HEK293 (cell line): ENCODE measurements at regions of chr1 and their contacts with region 1.

Region 1: DNA sequence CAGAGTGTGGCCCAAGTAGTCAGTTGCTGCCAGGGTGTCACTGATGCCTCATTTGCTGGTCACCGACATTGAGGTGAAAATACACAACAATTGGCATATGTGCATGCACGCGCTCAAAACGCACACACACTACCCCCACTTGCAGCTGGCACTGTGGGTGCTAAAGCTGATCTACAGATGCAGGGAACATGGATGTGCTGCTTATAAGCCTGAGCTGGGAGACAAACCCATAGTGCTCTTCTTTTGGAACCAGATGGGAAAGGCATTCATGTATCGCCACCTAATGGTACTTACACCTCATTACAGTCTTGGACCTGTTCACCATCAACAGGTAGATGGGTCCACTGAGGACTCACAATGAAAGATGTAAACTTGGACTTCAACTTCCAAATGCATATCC is 70.3 kb upstream of the CAMK1G start:
- H3K4me3 ChIP-seq: no peak overlapping the region
- H3K27ac ChIP-seq: no peak overlapping the region
- H3K4me1 ChIP-seq: no peaks in the 10 kb centered on the region
- CTCF ChIP-seq: peak; percentile 19; the same call in 1 of the 2 replicates

Region 2: GRCh38 chr1:209435654-209436566 is 77.3 kb before region 1 on chr1:
- CTCF ChIA-PET with region 1: interaction called, 14 read pairs
- POLR2A ChIA-PET with region 1: no interaction called
- H3K4me3 ChIP-seq: no peak overlapping the region
- H3K27ac ChIP-seq: no peak overlapping the region
- H3K4me1 ChIP-seq: no peaks in the 10 kb centered on the region
- CTCF ChIP-seq: peak; percentile 66

Region 3: GRCh38 chr1:209493559-209493958 is 19.7 kb before region 1 on chr1:
- CTCF ChIA-PET with region 1: interaction called, 13 read pairs
- POLR2A ChIA-PET with region 1: no interaction called
- H3K4me3 ChIP-seq: no peak overlapping the region
- H3K27ac ChIP-seq: no peak overlapping the region
- H3K4me1 ChIP-seq: no peaks in the 10 kb centered on the region
- CTCF ChIP-seq: no peak

Region 4: GRCh38 chr1:209556162-209556690 is 43.0 kb after region 1 on chr1:
- CTCF ChIA-PET with region 1: no interaction called
- POLR2A ChIA-PET with region 1: no interaction called
- H3K4me3 ChIP-seq: no peak overlapping the region
- H3K27ac ChIP-seq: no peak overlapping the region
- H3K4me1 ChIP-seq: no peaks in the 10 kb centered on the region
- CTCF ChIP-seq: no peak